HCT116 (cell line): ENCODE measurements at regions of chr3 and their contacts with region 1.

Region 1: DNA sequence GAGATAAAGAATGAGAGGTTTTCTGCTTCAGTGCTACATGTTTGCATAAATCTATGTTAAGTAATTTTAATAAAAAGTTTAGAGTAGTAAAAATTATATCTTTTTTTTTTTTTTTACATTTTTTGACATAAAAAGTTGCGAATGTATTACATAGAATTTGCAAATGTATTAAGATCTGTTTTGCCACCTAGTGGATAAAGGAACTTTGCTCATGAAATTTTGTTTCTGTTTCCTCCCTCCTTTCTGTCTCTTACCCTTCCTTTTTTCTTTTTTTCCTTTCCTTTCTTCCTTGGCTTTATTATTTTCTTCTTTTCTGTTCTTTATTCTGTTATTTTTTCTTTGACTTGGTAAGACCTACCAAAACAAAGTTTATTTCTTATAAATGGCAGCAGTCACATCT is 58.5 kb upstream of the UTS2B start:
- DNase-seq: no peak
- ATAC-seq: no peak
- H3K4me3 ChIP-seq: no peak overlapping the region
- H3K27ac ChIP-seq: no peak overlapping the region
- H3K4me1 ChIP-seq: no peaks in the 10 kb centered on the region
- H3K27me3 ChIP-seq: no peaks in the 10 kb centered on the region
- CTCF ChIP-seq: peak in 1 of 3 experiments; percentile 26; a peak in 2 of 6 replicates
- POLR2A ChIP-seq: no peak
- RAD21 ChIP-seq: peak; percentile 37

Region 2: DNA sequence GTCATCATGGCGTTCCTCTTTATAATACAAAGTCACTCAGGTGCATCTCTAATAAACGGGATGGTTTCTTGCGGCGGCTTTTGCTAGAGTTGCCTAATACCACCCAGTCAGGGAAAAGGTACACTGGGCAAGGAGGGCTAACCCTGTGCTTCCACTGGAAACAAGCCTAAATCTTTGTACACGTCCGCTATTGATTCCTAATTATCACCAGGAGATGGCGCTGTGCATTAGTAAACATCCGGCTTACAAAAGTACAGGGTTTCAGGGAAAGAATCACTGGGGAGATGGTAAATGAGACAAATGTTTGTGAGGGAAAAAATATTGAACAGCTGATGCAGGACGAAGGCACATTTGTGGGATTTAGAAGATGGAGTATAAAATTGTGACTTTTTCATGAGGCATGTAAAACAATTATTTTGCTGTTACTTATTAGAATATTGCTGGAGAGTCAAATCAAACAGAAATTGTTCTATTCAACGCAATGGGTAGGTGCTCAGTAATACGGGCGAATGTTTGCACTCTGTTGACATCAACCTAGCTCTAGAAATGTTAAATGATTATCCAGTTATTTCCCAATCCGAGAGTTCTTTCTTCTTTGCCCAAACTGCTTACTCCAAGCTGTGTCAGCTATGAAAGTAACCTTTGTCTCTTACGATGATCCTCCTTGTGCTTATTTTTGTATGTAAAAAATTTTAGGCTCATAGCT is 576.9 kb before region 1 on chr3:
- CTCF ChIA-PET with region 1: no interaction called
- POLR2A ChIA-PET with region 1: no interaction called
- RAD21 ChIA-PET with region 1: no interaction called
- intact Hi-C with region 1: no loop called
- DNase-seq: peak; percentile 67
- ATAC-seq: peak; percentile 95
- H3K4me3 ChIP-seq: no peak overlapping the region
- H3K27ac ChIP-seq: no peak overlapping the region
- H3K4me1 ChIP-seq: no peaks in the 10 kb centered on the region
- H3K27me3 ChIP-seq: no peaks in the 10 kb centered on the region
- CTCF ChIP-seq: peak; percentile 64 to 84 (median 74)
- POLR2A ChIP-seq: no peak
- RAD21 ChIP-seq: peak; percentile 79

Region 3: DNA sequence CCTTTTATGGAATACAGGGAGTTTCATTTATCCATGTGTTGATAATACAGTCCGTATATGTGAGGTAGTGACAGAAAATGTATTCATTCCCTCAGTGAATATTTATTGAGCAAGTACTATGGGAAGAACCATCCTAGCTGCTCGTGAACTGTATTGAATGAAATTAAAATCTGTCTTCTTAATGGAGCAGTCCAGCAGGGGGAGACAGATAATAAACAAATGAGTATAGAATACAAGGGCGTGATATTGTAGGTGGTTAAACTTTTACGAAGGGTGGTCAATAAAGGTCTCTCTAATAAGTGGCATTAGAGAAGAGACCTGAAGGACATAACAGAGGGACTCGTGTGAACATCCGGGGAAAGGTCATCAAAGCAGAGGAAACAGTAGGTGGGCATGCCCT is 252.5 kb before region 1 on chr3:
- CTCF ChIA-PET with region 1: no interaction called
- POLR2A ChIA-PET with region 1: no interaction called
- RAD21 ChIA-PET with region 1: no interaction called
- intact Hi-C with region 1: loop called (anchors 5 kb)
- DNase-seq: peak; percentile 23
- ATAC-seq: peak; percentile 83
- H3K4me3 ChIP-seq: no peak overlapping the region
- H3K27ac ChIP-seq: no peak overlapping the region
- H3K4me1 ChIP-seq: peaks cover under 1 to 6% of the 10 kb centered on the region in 2 experiments; a peak in 3 of 4 replicates
- H3K27me3 ChIP-seq: no peaks in the 10 kb centered on the region
- CTCF ChIP-seq: peak; percentile 42 to 67 (median 54); a peak in 4 of 6 replicates
- POLR2A ChIP-seq: no peak
- RAD21 ChIP-seq: peak; percentile 76

Region 4: GRCh38 chr3:191170097-191170496 is 218.7 kb before region 1 on chr3:
- CTCF ChIA-PET with region 1: no interaction called
- POLR2A ChIA-PET with region 1: no interaction called
- RAD21 ChIA-PET with region 1: no interaction called
- intact Hi-C with region 1: no loop called
- DNase-seq: no peak
- ATAC-seq: no peak
- H3K4me3 ChIP-seq: no peak overlapping the region
- H3K27ac ChIP-seq: no peak overlapping the region
- H3K4me1 ChIP-seq: no peaks in the 10 kb centered on the region
- H3K27me3 ChIP-seq: no peaks in the 10 kb centered on the region
- CTCF ChIP-seq: no peak
- POLR2A ChIP-seq: no peak
- RAD21 ChIP-seq: no peak